Calu3 (cell line): ENCODE measurements at regions of chr17 and their contacts with region 1.

Region 1: DNA sequence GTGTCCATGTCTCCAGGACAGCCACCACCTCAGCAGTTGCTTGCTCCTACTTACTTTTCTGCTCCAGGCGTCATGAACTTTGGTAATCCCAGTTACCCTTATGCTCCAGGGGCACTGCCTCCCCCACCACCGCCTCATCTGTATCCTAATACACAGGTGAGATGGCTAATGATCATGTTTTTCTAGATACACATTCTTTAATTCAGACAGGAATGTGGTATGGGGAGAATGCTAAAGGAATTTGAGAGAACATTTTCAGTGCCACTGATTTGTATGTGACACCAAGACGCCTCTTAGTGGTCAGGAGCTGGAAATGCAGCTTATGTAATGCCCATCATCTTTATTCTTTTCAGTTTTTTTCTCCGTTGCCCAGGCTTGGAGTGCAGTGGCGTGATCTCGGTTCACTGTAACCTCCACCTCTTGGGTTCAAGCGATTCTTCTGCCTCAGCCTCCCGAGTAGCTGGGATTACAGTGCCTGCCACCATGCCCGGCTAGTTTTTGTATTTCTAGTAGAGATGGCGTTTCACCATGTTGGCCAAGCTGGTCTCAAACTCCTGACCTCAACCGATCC is 8.9 kb upstream of the RAPGEFL1 start:
- DNase-seq: peak; percentile 88
- H3K4me3 Mint-ChIP-seq: no peak overlapping the region
- H3K27ac Mint-ChIP-seq: peak overlapping the region; percentile 4
- H3K4me1 Mint-ChIP-seq: peaks cover 17% of the 10 kb centered on the region
- H3K27me3 Mint-ChIP-seq: no peaks in the 10 kb centered on the region
- CTCF ChIP-seq: no peak

Region 2: GRCh38 chr17:40026816-40027613 is 141.3 kb before region 1 on chr17:
- CTCF ChIA-PET with region 1: interaction called, 12 read pairs
- intact Hi-C with region 1: no loop called
- DNase-seq: peak; percentile 100
- H3K4me3 Mint-ChIP-seq: no peak overlapping the region
- H3K27ac Mint-ChIP-seq: no peak overlapping the region
- H3K4me1 Mint-ChIP-seq: peaks cover 30% of the 10 kb centered on the region
- H3K27me3 Mint-ChIP-seq: no peaks in the 10 kb centered on the region
- CTCF ChIP-seq: no peak

Region 3: DNA sequence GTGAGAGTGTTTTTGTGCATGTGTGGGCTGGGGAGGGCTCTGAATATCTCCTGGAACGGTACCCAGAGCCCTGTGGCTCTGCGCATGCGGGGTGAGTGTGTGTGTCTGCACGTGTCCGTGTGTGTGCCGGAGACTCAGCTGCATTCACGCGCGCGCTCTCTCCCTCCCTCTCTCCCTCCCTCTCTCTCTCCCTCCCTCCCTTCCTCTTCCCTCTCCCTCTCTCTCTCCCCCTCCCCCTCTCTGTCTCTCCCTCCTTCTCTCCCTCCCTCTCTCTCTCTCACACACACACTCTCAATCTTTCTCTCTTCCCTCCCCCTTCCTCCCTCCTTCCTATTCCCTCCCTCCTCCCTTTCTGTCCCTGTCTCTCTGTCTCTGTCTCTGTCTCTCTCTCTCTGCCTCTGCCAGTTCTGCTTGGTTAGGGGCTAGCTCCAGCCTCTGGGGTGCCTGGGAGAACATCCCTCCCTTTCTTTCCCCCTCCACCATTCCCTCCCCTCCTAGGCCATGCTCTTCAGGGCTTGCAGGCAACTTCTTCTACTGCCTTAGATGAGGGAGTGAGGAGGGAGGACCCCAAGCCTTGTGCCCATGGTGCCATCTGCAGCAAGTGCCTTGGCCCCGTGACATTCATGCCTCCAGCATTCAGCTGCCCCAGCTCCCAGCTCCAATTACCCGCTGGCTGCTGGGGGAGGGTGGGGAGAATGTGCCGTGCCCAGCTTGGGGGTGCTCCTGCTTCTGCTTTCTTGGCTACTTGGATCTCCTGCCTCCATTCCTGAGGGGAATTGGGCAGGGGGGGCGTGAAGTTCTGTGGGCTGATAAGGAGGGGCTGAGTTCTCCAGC is 99.2 kb before region 1 on chr17:
- CTCF ChIA-PET with region 1: interaction called, 26 read pairs
- intact Hi-C with region 1: no loop called
- DNase-seq: peak; percentile 71
- H3K4me3 Mint-ChIP-seq: peak overlapping the region; percentile 63
- H3K27ac Mint-ChIP-seq: no peak overlapping the region
- H3K4me1 Mint-ChIP-seq: peaks cover 94% of the 10 kb centered on the region
- H3K27me3 Mint-ChIP-seq: no peaks in the 10 kb centered on the region
- CTCF ChIP-seq: no peak

Region 4: DNA sequence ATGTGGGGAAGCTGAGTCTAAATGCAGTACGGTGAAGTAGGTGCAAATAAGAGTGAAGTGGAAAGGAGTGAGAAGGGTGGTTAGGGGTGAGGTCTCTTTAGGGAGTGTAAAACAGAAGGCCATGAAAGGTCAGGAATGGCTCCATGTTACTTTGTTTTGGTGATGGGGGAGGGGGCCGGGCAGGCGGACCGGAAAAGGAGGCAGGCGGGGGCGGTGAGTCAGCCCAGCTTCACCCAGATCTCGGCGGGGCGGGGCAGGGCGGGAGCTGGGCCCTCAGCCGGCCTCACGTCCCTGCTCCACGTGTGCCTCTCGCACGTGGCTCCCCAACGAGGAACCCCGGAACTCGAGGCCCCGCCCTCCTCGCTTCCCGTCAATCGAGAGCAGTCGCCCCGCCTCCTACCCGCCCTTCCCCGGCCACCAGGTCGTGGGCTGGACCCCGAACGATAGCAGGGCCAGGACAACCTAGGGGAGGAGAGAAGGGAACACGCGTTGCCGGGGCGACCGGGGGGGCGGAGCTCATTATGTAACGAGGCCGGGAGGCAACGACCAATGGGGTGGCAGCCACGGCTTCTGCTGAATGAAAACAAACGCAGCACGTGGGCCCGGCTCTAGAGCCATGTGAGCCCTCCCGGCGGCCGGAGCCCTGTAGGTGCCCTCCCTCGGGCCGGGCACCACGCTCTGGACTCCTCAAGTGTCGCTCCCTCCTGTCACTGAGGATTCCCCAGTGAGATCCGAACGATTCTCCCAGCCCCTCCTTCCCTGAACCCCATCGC is 69.3 kb before region 1 on chr17:
- CTCF ChIA-PET with region 1: interaction called, 65 read pairs
- intact Hi-C with region 1: loop called (anchors 1 kb)
- DNase-seq: peak; percentile 100
- H3K4me3 Mint-ChIP-seq: peak overlapping the region; percentile 80
- H3K27ac Mint-ChIP-seq: peak overlapping the region; percentile 85
- H3K4me1 Mint-ChIP-seq: peaks cover 73% of the 10 kb centered on the region
- H3K27me3 Mint-ChIP-seq: no peaks in the 10 kb centered on the region
- CTCF ChIP-seq: no peak

Region 5: DNA sequence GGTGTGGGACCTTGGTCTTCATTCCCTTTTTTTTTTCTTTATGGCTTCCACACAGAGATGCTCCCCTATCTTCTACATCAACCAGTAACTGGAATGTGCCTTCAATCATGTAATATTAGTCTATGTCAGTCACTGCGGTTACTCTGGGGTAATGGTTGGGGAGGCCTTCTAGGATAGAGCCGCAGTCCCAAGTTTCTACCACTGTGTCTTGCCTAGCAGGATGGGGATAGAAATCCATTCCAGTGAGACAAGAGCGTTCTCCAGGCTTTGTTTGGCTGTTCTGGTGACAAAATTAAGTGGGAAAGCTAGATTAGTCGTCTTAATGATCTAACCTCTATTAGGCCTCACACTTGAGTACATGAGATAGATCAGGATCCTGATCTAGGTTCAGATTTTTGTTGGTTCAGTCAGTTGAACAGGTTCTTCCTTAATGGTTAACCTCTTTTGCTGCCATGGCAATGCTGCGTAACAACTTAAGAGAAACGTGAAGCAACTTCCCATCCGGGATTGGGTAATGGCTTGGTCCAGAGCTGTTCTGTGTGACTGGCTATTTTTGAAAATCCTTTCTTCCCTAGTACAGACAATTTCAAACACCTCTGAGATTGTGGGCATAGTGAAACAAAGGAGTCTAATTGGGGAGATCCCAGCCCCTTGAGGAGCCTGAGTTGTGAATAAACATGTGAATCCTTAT is 37.9 kb before region 1 on chr17:
- CTCF ChIA-PET with region 1: interaction called, 86 read pairs
- intact Hi-C with region 1: loop called (anchors 2 kb)
- DNase-seq: no peak
- H3K4me3 Mint-ChIP-seq: no peak overlapping the region
- H3K27ac Mint-ChIP-seq: peak overlapping the region; percentile 1
- H3K4me1 Mint-ChIP-seq: peaks cover 38% of the 10 kb centered on the region
- H3K27me3 Mint-ChIP-seq: no peaks in the 10 kb centered on the region
- CTCF ChIP-seq: no peak

Region 6: GRCh38 chr17:40157973-40158372 is 10.4 kb before region 1 on chr17:
- CTCF ChIA-PET with region 1: interaction called, 55 read pairs
- intact Hi-C with region 1: no loop called
- DNase-seq: no peak
- H3K4me3 Mint-ChIP-seq: no peak overlapping the region
- H3K27ac Mint-ChIP-seq: no peak overlapping the region
- H3K4me1 Mint-ChIP-seq: no peaks in the 10 kb centered on the region
- H3K27me3 Mint-ChIP-seq: no peaks in the 10 kb centered on the region
- CTCF ChIP-seq: no peak

Region 7: GRCh38 chr17:40203131-40203530 is 34.8 kb after region 1 on chr17:
- CTCF ChIA-PET with region 1: interaction called, 145 read pairs
- intact Hi-C with region 1: no loop called
- DNase-seq: no peak
- H3K4me3 Mint-ChIP-seq: no peak overlapping the region
- H3K27ac Mint-ChIP-seq: no peak overlapping the region
- H3K4me1 Mint-ChIP-seq: peaks cover 7% of the 10 kb centered on the region
- H3K27me3 Mint-ChIP-seq: no peaks in the 10 kb centered on the region
- CTCF ChIP-seq: no peak